ENCODE measurements at regions of chr15 and their contacts with region 1.

Region 1: GRCh38 chr15:27399241-27399640 is 428.3 kb downstream of the GABRG3 start:
- DNase-seq: no peak
- ATAC-seq: no peak
- H3K4me3 ChIP-seq: no peak overlapping the region
- H3K27ac ChIP-seq: no peak overlapping the region
- H3K4me1 ChIP-seq: no peaks in the 10 kb centered on the region
- H3K27me3 ChIP-seq: no peaks in the 10 kb centered on the region
- CTCF ChIP-seq: no peak
- EP300 ChIP-seq: no peak
- POLR2A ChIP-seq: no peak
- RAD21 ChIP-seq: no peak

Region 2: DNA sequence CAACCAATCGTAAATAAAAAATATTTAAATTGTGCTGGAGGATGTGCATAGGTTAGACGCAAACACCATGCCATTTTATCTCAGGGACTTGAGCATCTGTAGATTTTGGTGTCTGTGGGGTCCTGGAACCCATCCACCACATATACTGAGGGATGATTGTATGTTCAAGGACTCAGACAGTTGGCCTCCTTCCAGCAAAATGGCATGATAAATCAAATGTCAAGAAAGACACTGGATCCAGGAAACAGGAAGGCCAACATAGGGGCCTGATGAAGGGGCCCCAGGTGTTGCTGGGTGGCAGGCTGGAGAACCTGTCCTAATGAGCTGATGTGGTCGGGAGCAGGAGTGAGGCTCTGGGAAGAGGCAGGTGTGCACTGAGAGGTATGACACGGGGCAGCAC is 138.7 kb before region 1 on chr15:
- CTCF ChIA-PET with region 1: no interaction called
- POLR2A ChIA-PET with region 1: no interaction called
- RAD21 ChIA-PET with region 1: no interaction called
- SMC1A ChIA-PET with region 1: no interaction called
- in situ Hi-C with region 1: no loop called
- intact Hi-C with region 1: no loop called
- DNase-seq: no peak
- ATAC-seq: no peak
- H3K4me3 ChIP-seq: no peak overlapping the region
- H3K27ac ChIP-seq: no peak overlapping the region
- H3K4me1 ChIP-seq: no peaks in the 10 kb centered on the region
- H3K27me3 ChIP-seq: no peaks in the 10 kb centered on the region
- CTCF ChIP-seq: no peak
- EP300 ChIP-seq: no peak
- POLR2A ChIP-seq: no peak
- RAD21 ChIP-seq: no peak

Region 3: GRCh38 chr15:27454281-27455075 is 55.2 kb after region 1 on chr15:
- CTCF ChIA-PET with region 1: no interaction called
- POLR2A ChIA-PET with region 1: no interaction called
- RAD21 ChIA-PET with region 1: no interaction called
- SMC1A ChIA-PET with region 1: no interaction called
- in situ Hi-C with region 1: loop called (anchors 10 kb)
- intact Hi-C with region 1: no loop called
- DNase-seq: no peak
- ATAC-seq: no peak
- H3K4me3 ChIP-seq: no peak overlapping the region
- H3K27ac ChIP-seq: no peak overlapping the region
- H3K4me1 ChIP-seq: no peaks in the 10 kb centered on the region
- H3K27me3 ChIP-seq: no peaks in the 10 kb centered on the region
- CTCF ChIP-seq: no peak
- EP300 ChIP-seq: no peak
- POLR2A ChIP-seq: no peak
- RAD21 ChIP-seq: no peak

Region 4: GRCh38 chr15:27831384-27832236 is 432.4 kb after region 1 on chr15:
- CTCF ChIA-PET with region 1: no interaction called
- POLR2A ChIA-PET with region 1: no interaction called
- RAD21 ChIA-PET with region 1: no interaction called
- SMC1A ChIA-PET with region 1: no interaction called
- in situ Hi-C with region 1: no loop called
- intact Hi-C with region 1: no loop called
- DNase-seq: no peak
- ATAC-seq: no peak
- H3K4me3 ChIP-seq: no peak overlapping the region
- H3K27ac ChIP-seq: no peak overlapping the region
- H3K4me1 ChIP-seq: no peaks in the 10 kb centered on the region
- H3K27me3 ChIP-seq: no peaks in the 10 kb centered on the region
- CTCF ChIP-seq: no peak
- EP300 ChIP-seq: no peak
- POLR2A ChIP-seq: no peak
- RAD21 ChIP-seq: no peak